ENCODE measurements at regions of chr17 and their contacts with region 1.

Region 1: GRCh38 chr17:18260332-18261144 is at the start of gene MIEF2:
- DNase-seq: peak; percentile 76 to 87 (median 86)
- H3K4me3 ChIP-seq: peak within 1 kb of the TSS; percentile 62 to 90 (median 67)
- H3K4me3 Mint-ChIP-seq: peak within 1 kb of the TSS; percentile 83 to 84
- H3K27ac ChIP-seq: peak within 1 kb of the TSS; percentile 22 to 80
- H3K27ac Mint-ChIP-seq: peak within 1 kb of the TSS in 6 of 7 donors; percentile 68 to 90 (median 80)
- H3K4me1 ChIP-seq: peaks cover 39 to 54% of the 10 kb centered on the region in 2 donors
- H3K4me1 Mint-ChIP-seq: peaks cover 38% of the 10 kb centered on the region
- H3K27me3 ChIP-seq: no peaks in the 10 kb centered on the region
- H3K27me3 Mint-ChIP-seq: peaks cover 0 to 2% (median 1%) of the 10 kb centered on the region in 3 donors
- CTCF ChIP-seq: no peak
- polyA plus RNA-seq, gene MIEF2: 3.5 to 6.1 (median 4.9) TPM

Region 2: GRCh38 chr17:18300725-18301480 is 40.4 kb after region 1 on chr17:
- intact Hi-C with region 1: loop called in 1 of 2 experiments (anchors 5 kb)
- DNase-seq: peak; percentile 53 to 71 (median 64)
- H3K4me3 ChIP-seq: peak overlapping the region in 2 of 3 experiments; percentile 4 to 59
- H3K4me3 Mint-ChIP-seq: peak overlapping the region; percentile 64 to 78
- H3K27ac ChIP-seq: peak overlapping the region; percentile 72 to 85
- H3K27ac Mint-ChIP-seq: peak overlapping the region; percentile 91 to 97 (median 95)
- H3K4me1 ChIP-seq: peaks cover 62 to 70% of the 10 kb centered on the region in 2 donors
- H3K4me1 Mint-ChIP-seq: peaks cover 67% of the 10 kb centered on the region
- H3K27me3 ChIP-seq: no peaks in the 10 kb centered on the region
- H3K27me3 Mint-ChIP-seq: no peaks in the 10 kb centered on the region
- CTCF ChIP-seq: no peak

Region 3: GRCh38 chr17:18314731-18315561 is 54.4 kb after region 1 on chr17 and contains the starts of genes SMCR8 and TOP3A:
- intact Hi-C with region 1: loop called (anchors 2 kb)
- DNase-seq: peak; percentile 94 to 98 (median 97)
- H3K4me3 ChIP-seq: peak within 1 kb of the TSS; percentile 55 to 88 (median 84)
- H3K4me3 Mint-ChIP-seq: peak within 1 kb of the TSS; percentile 93 to 97
- H3K27ac ChIP-seq: peak within 1 kb of the TSS; percentile 97 to 100
- H3K27ac Mint-ChIP-seq: peak within 1 kb of the TSS; percentile 98 to 100 (median 100)
- H3K4me1 ChIP-seq: peaks cover 65 to 87% of the 10 kb centered on the region in 2 donors
- H3K4me1 Mint-ChIP-seq: peaks cover 78% of the 10 kb centered on the region
- H3K27me3 ChIP-seq: no peaks in the 10 kb centered on the region
- H3K27me3 Mint-ChIP-seq: no peaks in the 10 kb centered on the region
- CTCF ChIP-seq: no peak
- polyA plus RNA-seq, gene SMCR8: 2.4 to 24.4 (median 5.3) TPM
- polyA plus RNA-seq, gene TOP3A: 15.2 to 25.6 (median 22.3) TPM